Heart right ventricle (tissue), 16 donors: ENCODE measurements at regions of chr17 and their contacts with region 1.

Region 1: GRCh38 chr17:74584292-74585060 is 7.6 kb downstream of the CD300LD start:
- DNase-seq: no peak
- ATAC-seq: no peak
- H3K4me3 ChIP-seq: no peak overlapping the region
- H3K27ac ChIP-seq: no peak overlapping the region
- H3K4me1 ChIP-seq: no peaks in the 10 kb centered on the region
- H3K27me3 ChIP-seq: peaks cover 0 to 13% (median 0%) of the 10 kb centered on the region in 7 donors
- CTCF ChIP-seq: no peak

Region 2: DNA sequence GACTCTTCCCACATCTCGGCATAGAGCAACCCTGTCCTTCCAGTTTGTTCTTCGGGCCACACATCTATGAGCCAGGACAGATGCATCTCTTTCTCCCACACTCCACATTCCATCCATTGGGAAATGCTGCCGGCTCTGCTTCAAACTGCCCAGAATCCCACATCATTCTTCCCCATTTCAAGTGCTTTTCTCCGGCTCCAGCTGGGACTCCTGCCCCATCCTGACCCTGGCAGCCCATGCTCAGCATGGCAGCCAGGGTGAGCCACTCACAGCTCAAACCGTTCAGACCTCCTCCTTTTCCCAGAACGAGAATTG is 807.4 kb before region 1 on chr17:
- intact Hi-C with region 1: loop called in 1 of 10 experiments (anchors 5 kb)
- DNase-seq: no peak
- ATAC-seq: peak in 4 of 8 donors; percentile 36 to 73 (median 46)
- H3K4me3 ChIP-seq: no peak overlapping the region
- H3K27ac ChIP-seq: no peak overlapping the region
- H3K4me1 ChIP-seq: peaks cover 0 to 16% (median 0%) of the 10 kb centered on the region in 9 donors
- H3K27me3 ChIP-seq: peaks cover 0 to 10% (median 0%) of the 10 kb centered on the region in 7 donors
- CTCF ChIP-seq: peak in 1 of 9 donors; percentile 5

Region 3: DNA sequence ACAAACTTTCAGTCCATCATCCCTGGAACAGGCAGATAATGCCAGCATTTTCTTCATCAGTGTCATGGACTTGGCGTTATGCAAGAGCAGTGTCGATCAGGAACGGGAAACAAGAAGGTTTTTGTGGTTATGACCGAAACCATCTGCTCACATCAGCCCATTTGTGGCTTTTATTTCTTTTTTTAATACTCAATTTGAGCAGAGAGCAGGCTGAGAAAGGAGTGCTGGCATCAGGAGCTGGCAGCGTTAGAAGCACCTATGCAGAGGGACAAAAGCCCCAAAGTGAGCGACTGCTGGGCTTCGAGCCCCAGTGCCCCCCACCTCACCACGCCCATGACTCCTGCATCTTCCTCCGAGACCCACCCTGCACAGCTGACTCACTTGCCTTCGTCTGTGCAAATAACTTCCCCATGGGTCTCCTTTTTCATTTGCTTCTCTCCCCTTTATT is 55.3 kb after region 1 on chr17:
- intact Hi-C with region 1: no loop called
- DNase-seq: no peak
- ATAC-seq: peak in 6 of 8 donors; percentile 38 to 52 (median 44)
- H3K4me3 ChIP-seq: no peak overlapping the region
- H3K27ac ChIP-seq: peak overlapping the region in 1 of 10 donors; percentile 84
- H3K4me1 ChIP-seq: peaks cover 0 to 47% (median 0%) of the 10 kb centered on the region in 9 donors
- H3K27me3 ChIP-seq: peaks cover 0 to 86% (median 55%) of the 10 kb centered on the region in 7 donors
- CTCF ChIP-seq: no peak